ENCODE measurements at regions of chr19 and their contacts with region 1.

Region 1: DNA sequence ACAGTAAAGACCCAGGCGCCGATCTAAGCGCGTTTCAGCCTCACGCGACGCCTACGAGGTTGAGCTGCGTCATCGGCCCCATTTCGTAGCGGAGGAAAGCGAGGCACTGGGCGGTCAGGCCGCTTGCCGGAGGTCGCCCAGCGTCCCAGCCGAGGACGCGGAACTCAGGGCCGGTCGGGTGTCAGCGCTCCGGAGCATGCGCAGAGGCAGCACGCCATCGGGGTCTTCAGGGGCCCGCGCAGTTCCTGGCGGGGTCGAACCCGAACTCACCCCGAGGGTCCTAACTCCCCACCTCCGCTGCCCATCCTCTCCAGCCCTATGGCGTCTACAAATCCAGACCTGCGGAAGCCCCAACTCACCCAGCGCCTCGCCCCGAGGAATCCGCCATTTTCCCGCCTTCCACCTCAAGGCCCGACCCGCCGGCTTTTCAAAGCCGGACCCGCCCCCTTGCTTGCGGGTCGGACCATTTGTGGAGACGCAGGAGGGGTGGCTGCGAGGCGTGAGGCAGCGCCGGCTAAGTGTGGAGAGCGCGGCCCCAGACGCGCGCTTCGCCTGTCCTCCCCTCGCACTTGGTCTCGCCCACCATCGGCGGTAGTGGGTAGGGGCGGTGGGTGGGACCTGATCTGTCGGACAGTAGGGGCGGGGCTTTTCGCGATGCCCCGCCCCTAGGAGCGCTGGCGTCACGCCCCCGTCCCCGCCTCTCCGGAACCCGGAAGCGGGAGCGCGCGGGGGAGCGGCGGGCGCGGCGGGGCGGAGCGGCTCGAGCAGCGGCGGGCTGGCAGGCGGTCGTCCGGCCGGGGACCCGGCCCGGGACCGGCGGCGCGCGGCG is at the starts of genes HAUS8 and MYO9B:
- DNase-seq: peak; percentile 100
- ATAC-seq: peak; percentile 82
- H3K4me3 Mint-ChIP-seq: peak within 1 kb of the TSS; percentile 99
- H3K27ac Mint-ChIP-seq: peak within 1 kb of the TSS; percentile 98
- H3K4me1 Mint-ChIP-seq: peaks cover 56% of the 10 kb centered on the region
- H3K27me3 Mint-ChIP-seq: no peaks in the 10 kb centered on the region
- total RNA-seq, gene HAUS8: 32.6 to 41.7 TPM
- total RNA-seq, gene MYO9B: 90.3 to 98.5 TPM

Region 2: GRCh38 chr19:16470911-16471811 is 604.1 kb before region 1 on chr19:
- CTCF ChIA-PET with region 1: no interaction called
- POLR2A ChIA-PET with region 1: no interaction called
- intact Hi-C with region 1: loop called in 1 of 2 experiments (anchors 1 kb)
- DNase-seq: peak; percentile 60
- ATAC-seq: peak; percentile 20
- H3K4me3 Mint-ChIP-seq: peak overlapping the region; percentile 85
- H3K27ac Mint-ChIP-seq: peak overlapping the region; percentile 72
- H3K4me1 Mint-ChIP-seq: peaks cover 37% of the 10 kb centered on the region
- H3K27me3 Mint-ChIP-seq: peaks cover 2% of the 10 kb centered on the region

Region 3: GRCh38 chr19:16628183-16628983 is 446.9 kb before region 1 on chr19 and contains the start of gene MED26:
- CTCF ChIA-PET with region 1: no interaction called
- POLR2A ChIA-PET with region 1: no interaction called
- intact Hi-C with region 1: loop called in 1 of 2 experiments (anchors 1 kb)
- DNase-seq: peak; percentile 98
- ATAC-seq: peak; percentile 92
- H3K4me3 Mint-ChIP-seq: peak within 1 kb of the TSS; percentile 87
- H3K27ac Mint-ChIP-seq: peak within 1 kb of the TSS; percentile 100
- H3K4me1 Mint-ChIP-seq: peaks cover 39% of the 10 kb centered on the region
- H3K27me3 Mint-ChIP-seq: no peaks in the 10 kb centered on the region
- total RNA-seq, gene MED26: 13.6 to 14.5 TPM

Region 4: DNA sequence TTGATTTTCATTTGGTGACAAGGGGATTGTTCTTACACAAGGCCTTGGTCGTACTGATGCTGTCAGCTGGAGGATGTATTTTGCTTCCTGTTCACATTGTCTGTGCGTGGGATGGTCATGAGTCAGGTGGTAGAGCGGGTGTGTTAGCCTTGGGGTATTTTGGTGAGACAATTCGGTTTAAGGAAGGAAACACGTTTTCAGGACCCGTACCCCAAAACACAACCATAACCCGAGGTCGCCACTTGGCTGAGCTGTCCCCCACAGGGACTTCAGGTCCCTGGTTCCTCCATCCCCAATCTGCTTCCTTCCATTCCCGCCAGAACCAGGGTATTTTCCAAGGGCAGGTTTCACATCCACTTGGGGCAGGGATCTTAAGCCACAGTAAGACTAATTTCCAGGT is 15.3 kb after region 1 on chr19:
- CTCF ChIA-PET with region 1: interaction called, 8 read pairs
- POLR2A ChIA-PET with region 1: interaction called, 7 read pairs
- intact Hi-C with region 1: loop called in 1 of 2 experiments (anchors 1 kb)
- DNase-seq: peak; percentile 68
- ATAC-seq: peak; percentile 88
- H3K4me3 Mint-ChIP-seq: no peak overlapping the region
- H3K27ac Mint-ChIP-seq: peak overlapping the region; percentile 69
- H3K4me1 Mint-ChIP-seq: peaks cover 34% of the 10 kb centered on the region
- H3K27me3 Mint-ChIP-seq: no peaks in the 10 kb centered on the region

Region 5: GRCh38 chr19:17235618-17236377 is 160.5 kb after region 1 on chr19:
- CTCF ChIA-PET with region 1: no interaction called
- POLR2A ChIA-PET with region 1: no interaction called
- intact Hi-C with region 1: loop called in 1 of 2 experiments (anchors 1 kb)
- DNase-seq: peak; percentile 87
- ATAC-seq: peak; percentile 85
- H3K4me3 Mint-ChIP-seq: peak overlapping the region; percentile 79
- H3K27ac Mint-ChIP-seq: peak overlapping the region; percentile 65
- H3K4me1 Mint-ChIP-seq: peaks cover 9% of the 10 kb centered on the region
- H3K27me3 Mint-ChIP-seq: no peaks in the 10 kb centered on the region

Region 6: GRCh38 chr19:17336872-17337722 is 261.8 kb after region 1 on chr19 and contains the start of gene GTPBP3:
- CTCF ChIA-PET with region 1: no interaction called
- POLR2A ChIA-PET with region 1: no interaction called
- intact Hi-C with region 1: loop called in 1 of 2 experiments (anchors 1 kb)
- DNase-seq: peak; percentile 98
- ATAC-seq: peak; percentile 89
- H3K4me3 Mint-ChIP-seq: peak within 1 kb of the TSS; percentile 98
- H3K27ac Mint-ChIP-seq: peak within 1 kb of the TSS; percentile 98
- H3K4me1 Mint-ChIP-seq: peaks cover 25% of the 10 kb centered on the region
- H3K27me3 Mint-ChIP-seq: no peaks in the 10 kb centered on the region
- total RNA-seq, gene GTPBP3: 37.3 to 39.8 TPM

Region 7: GRCh38 chr19:17555480-17555928 is 480.3 kb after region 1 on chr19 and contains the start of gene COLGALT1:
- CTCF ChIA-PET with region 1: no interaction called
- POLR2A ChIA-PET with region 1: no interaction called
- intact Hi-C with region 1: loop called in 1 of 2 experiments (anchors 1 kb)
- DNase-seq: peak; percentile 100
- ATAC-seq: peak; percentile 96
- H3K4me3 Mint-ChIP-seq: peak within 1 kb of the TSS; percentile 82
- H3K27ac Mint-ChIP-seq: peak within 1 kb of the TSS; percentile 67
- H3K4me1 Mint-ChIP-seq: peaks cover 21% of the 10 kb centered on the region
- H3K27me3 Mint-ChIP-seq: no peaks in the 10 kb centered on the region
- total RNA-seq, gene COLGALT1: 51.2 to 64.3 TPM

Measured in activated CD4-positive, alpha-beta T cell treated with anti-CD3 and anti-CD28 coated beads for 36 hours (primary cell).